Prostate gland (tissue), 2 donors: ENCODE measurements at regions of chr9 and their contacts with region 1.

Region 1: DNA sequence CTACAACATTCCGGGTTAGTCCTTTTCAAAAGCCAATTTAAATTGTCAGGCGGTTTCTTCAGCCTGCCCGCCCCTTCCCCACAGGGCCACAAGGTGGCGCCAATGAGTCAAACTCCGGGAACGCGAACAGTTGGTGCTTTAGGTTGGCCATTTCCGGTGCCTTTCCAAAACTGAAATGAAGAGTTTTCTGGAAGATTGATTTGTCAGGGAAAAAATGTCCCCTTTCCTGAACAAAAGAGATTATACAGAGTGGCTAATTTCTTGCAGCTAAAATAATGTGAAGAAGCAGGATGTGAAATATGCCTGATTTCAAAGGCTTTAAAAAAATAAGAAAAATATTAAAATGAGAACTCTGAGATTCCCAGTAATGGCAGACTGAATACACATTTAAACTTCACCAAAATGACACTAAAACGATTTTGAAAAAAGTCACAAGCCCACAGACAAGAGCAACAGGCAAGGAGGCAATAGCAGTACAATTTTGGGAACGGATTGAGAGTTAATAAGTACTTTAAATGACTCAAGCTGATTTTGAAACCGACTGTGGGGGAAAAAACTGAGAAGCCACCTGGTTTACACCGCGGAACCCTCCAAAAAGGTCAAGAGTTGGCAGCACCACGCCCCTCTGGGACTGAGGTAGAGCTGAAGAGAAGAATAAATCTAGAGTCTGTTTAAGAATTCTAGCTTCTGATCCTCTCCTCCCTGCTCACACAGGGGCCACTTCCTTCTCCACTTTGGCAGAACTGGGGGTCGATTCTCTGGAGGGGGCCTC is 45.7 kb downstream of the SLC46A2 start:
- DNase-seq: peak; percentile 62
- H3K4me3 ChIP-seq: no peak overlapping the region
- H3K27ac ChIP-seq: no peak overlapping the region
- H3K4me1 ChIP-seq: no peaks in the 10 kb centered on the region
- H3K27me3 ChIP-seq: no peaks in the 10 kb centered on the region
- CTCF ChIP-seq: peak; percentile 86 to 95 (median 92)
- POLR2A ChIP-seq: no peak

Region 2: DNA sequence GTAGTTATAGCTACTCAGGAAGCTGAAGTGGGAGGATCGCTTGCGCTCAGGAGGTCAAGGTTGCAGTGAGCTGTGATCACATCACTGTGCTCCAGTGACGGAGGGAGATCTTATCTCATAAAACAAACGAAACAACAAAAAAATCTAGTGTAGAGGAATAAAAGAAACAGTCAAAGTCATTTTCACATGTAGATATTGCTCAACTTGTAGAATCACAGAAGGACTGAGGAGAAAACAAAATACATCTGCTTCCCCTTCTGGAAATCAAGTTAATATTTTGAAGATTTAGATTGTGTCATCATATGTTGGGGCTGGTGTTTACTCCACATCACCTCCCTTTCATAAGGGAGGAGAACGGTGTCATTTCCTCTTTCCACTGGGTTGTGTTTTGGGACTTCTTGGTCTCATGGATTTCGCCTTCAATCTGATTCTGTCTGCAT is 53.9 kb after region 1 on chr9:
- intact Hi-C with region 1: loop called (anchors 2 kb)
- DNase-seq: no peak
- H3K4me3 ChIP-seq: no peak overlapping the region
- H3K27ac ChIP-seq: no peak overlapping the region
- H3K4me1 ChIP-seq: no peaks in the 10 kb centered on the region
- H3K27me3 ChIP-seq: no peaks in the 10 kb centered on the region
- CTCF ChIP-seq: no peak
- POLR2A ChIP-seq: no peak